ENCODE measurements at regions of chr7 and their contacts with region 1.

Region 1: GRCh38 chr7:25259587-25260243 is 31.4 kb upstream of the NPVF start:
- DNase-seq: peak; percentile 74
- ATAC-seq: peak; percentile 90
- H3K4me3 ChIP-seq: no peak overlapping the region
- H3K27ac ChIP-seq: no peak overlapping the region
- H3K4me1 ChIP-seq: no peaks in the 10 kb centered on the region
- H3K27me3 ChIP-seq: no peaks in the 10 kb centered on the region; a peak in 1 of 5 replicates
- CTCF ChIP-seq: peak; percentile 86
- EP300 ChIP-seq: no peak
- POLR2A ChIP-seq: no peak
- RAD21 ChIP-seq: peak; percentile 77

Region 2: GRCh38 chr7:25240340-25240739 is 19.4 kb before region 1 on chr7:
- CTCF ChIA-PET with region 1: no interaction called
- POLR2A ChIA-PET with region 1: no interaction called
- in situ Hi-C with region 1: no loop called
- intact Hi-C with region 1: no loop called
- DNase-seq: no peak
- ATAC-seq: no peak
- H3K4me3 ChIP-seq: no peak overlapping the region
- H3K27ac ChIP-seq: no peak overlapping the region
- H3K4me1 ChIP-seq: no peaks in the 10 kb centered on the region
- H3K27me3 ChIP-seq: peaks cover 0 to 12% of the 10 kb centered on the region in 2 experiments; a peak in 1 of 5 replicates
- CTCF ChIP-seq: no peak
- EP300 ChIP-seq: no peak
- POLR2A ChIP-seq: no peak
- RAD21 ChIP-seq: no peak

Region 3: DNA sequence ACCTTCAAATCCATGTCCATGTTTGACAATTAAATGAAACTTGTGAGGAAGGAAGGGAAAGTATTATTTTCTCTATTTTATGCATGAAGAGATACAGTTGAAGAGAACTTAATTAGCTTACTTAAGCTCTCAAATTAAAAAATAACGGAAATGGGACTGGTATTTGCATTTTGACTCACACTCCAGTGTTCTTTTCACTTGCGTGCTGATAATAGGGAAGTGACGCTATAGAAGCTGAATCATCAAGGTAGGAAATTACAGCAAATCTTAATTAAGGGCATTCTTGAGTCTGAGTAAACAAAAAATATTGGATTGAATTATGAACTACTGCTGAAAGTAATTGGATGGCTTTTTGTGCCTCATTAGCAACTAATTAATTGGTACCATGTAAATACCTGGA is 12.6 kb after region 1 on chr7:
- CTCF ChIA-PET with region 1: no interaction called
- POLR2A ChIA-PET with region 1: no interaction called
- in situ Hi-C with region 1: no loop called
- intact Hi-C with region 1: no loop called
- DNase-seq: no peak
- ATAC-seq: no peak
- H3K4me3 ChIP-seq: no peak overlapping the region
- H3K27ac ChIP-seq: no peak overlapping the region
- H3K4me1 ChIP-seq: no peaks in the 10 kb centered on the region
- H3K27me3 ChIP-seq: no peaks in the 10 kb centered on the region
- CTCF ChIP-seq: no peak
- EP300 ChIP-seq: no peak
- POLR2A ChIP-seq: no peak
- RAD21 ChIP-seq: no peak

Region 4: GRCh38 chr7:25389489-25390106 is 129.9 kb after region 1 on chr7:
- CTCF ChIA-PET with region 1: interaction called, 10 read pairs
- POLR2A ChIA-PET with region 1: no interaction called
- in situ Hi-C with region 1: loop called (anchors 5 kb)
- intact Hi-C with region 1: loop called (anchors 1 kb)
- DNase-seq: peak; percentile 13
- ATAC-seq: no peak
- H3K4me3 ChIP-seq: no peak overlapping the region
- H3K27ac ChIP-seq: no peak overlapping the region
- H3K4me1 ChIP-seq: no peaks in the 10 kb centered on the region
- H3K27me3 ChIP-seq: peaks cover 0 to 2% of the 10 kb centered on the region in 2 experiments; a peak in 2 of 5 replicates
- CTCF ChIP-seq: no peak; the same call in 1 of the 2 replicates
- EP300 ChIP-seq: no peak
- POLR2A ChIP-seq: no peak
- RAD21 ChIP-seq: no peak

Region 5: GRCh38 chr7:25559581-25560367 is 300.1 kb after region 1 on chr7:
- CTCF ChIA-PET with region 1: interaction called, 115 read pairs
- POLR2A ChIA-PET with region 1: no interaction called
- in situ Hi-C with region 1: loop called (anchors 5 kb)
- intact Hi-C with region 1: no loop called
- DNase-seq: no peak
- ATAC-seq: no peak
- H3K4me3 ChIP-seq: no peak overlapping the region
- H3K27ac ChIP-seq: no peak overlapping the region
- H3K4me1 ChIP-seq: no peaks in the 10 kb centered on the region
- H3K27me3 ChIP-seq: peaks cover 2 to 27% of the 10 kb centered on the region in 2 experiments; a peak in 3 of 5 replicates
- CTCF ChIP-seq: no peak
- EP300 ChIP-seq: no peak
- POLR2A ChIP-seq: no peak
- RAD21 ChIP-seq: no peak

Region 6: DNA sequence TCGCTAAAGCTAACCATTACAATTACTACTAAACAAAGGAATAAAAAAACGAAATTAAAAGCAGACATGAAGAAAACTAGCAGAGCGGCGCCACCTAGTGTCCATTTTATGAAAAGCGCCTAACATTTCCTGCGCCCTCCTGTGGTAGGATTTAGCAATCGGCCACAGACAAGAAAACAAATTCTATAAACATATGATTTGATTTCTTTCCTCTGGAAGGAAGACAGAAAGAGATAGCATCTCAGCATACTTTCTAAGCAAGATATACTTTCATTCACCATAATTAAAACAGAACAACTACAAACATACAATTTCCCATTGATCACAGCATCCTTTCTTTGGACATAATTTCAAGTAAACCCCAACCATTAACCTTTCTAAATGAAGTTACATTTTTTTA is 306.2 kb after region 1 on chr7:
- CTCF ChIA-PET with region 1: interaction called, 115 read pairs
- POLR2A ChIA-PET with region 1: no interaction called
- in situ Hi-C with region 1: loop called (anchors 5 kb)
- intact Hi-C with region 1: loop called (anchors 1 kb)
- DNase-seq: peak; percentile 50
- ATAC-seq: no peak
- H3K4me3 ChIP-seq: no peak overlapping the region
- H3K27ac ChIP-seq: no peak overlapping the region
- H3K4me1 ChIP-seq: peaks cover 9% of the 10 kb centered on the region
- H3K27me3 ChIP-seq: peaks cover 2 to 11% of the 10 kb centered on the region in 2 experiments; a peak in 3 of 5 replicates
- CTCF ChIP-seq: peak; percentile 90
- EP300 ChIP-seq: no peak
- POLR2A ChIP-seq: no peak
- RAD21 ChIP-seq: peak; percentile 74